ENCODE measurements at regions of chr14 and their contacts with region 1.

Region 1: GRCh38 chr14:73472185-73473114 is 14.1 kb upstream of the NUMB start:
- DNase-seq: peak; percentile 37
- ATAC-seq: peak; percentile 79
- H3K4me3 Mint-ChIP-seq: no peak overlapping the region
- H3K27ac Mint-ChIP-seq: no peak overlapping the region
- H3K4me1 Mint-ChIP-seq: peaks cover 3% of the 10 kb centered on the region
- H3K27me3 Mint-ChIP-seq: no peaks in the 10 kb centered on the region

Region 2: GRCh38 chr14:73173092-73173735 is 299.2 kb before region 1 on chr14:
- CTCF ChIA-PET with region 1: interaction called, 41 read pairs
- POLR2A ChIA-PET with region 1: no interaction called
- DNase-seq: peak; percentile 30
- ATAC-seq: peak; percentile 30
- H3K4me3 Mint-ChIP-seq: no peak overlapping the region
- H3K27ac Mint-ChIP-seq: no peak overlapping the region
- H3K4me1 Mint-ChIP-seq: peaks cover 3% of the 10 kb centered on the region
- H3K27me3 Mint-ChIP-seq: no peaks in the 10 kb centered on the region

Region 3: DNA sequence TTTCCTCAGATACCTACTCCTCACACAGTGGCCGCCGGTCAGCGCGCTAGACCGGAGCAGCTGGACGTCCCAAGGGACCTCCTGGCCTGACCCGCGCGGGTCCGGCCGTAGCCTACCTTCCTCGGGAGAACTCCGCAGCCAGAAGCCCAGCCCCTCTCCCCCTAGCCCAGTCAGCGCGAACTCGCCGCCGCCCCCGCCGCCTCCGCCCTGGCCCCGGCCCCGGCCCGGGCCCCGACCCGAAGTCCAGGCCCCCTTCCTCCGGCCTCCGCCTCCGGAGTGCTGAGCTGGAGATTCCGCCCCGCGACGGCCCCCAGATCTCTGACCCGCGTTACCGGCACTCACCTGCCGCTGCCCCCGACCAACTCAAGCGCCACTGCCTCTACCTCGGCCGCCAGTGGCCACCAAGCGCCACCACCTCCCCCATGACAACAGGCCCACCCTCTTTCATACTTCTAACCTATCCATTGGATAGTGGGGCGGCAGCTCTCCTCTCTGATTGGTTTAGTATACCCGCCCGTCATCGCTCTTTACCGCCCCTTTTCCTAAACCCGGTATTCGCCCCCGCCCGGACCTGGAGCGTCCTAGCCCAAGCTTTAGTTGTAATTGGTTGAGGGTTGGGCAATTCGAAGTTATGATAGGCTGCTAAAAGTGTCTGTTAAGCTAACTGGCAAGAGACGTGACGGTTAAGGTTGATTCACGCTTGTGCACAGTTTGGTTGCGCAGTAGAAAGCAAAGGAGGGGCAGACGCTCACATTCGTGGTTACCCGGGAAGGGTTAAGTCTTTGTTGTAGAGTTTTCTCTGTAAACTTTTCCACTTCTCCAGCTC is 14.1 kb before region 1 on chr14 and contains the start of gene NUMB:
- CTCF ChIA-PET with region 1: interaction called, 28 read pairs
- POLR2A ChIA-PET with region 1: interaction called, 4 read pairs
- DNase-seq: peak; percentile 99
- ATAC-seq: peak; percentile 99
- H3K4me3 Mint-ChIP-seq: peak within 1 kb of the TSS; percentile 97
- H3K27ac Mint-ChIP-seq: peak within 1 kb of the TSS; percentile 93
- H3K4me1 Mint-ChIP-seq: peaks cover 46% of the 10 kb centered on the region
- H3K27me3 Mint-ChIP-seq: peaks cover 3% of the 10 kb centered on the region
- total RNA-seq, gene NUMB: 37.7 to 40.2 TPM